ENCODE measurements at regions of chr9 and their contacts with region 1.

Region 1: DNA sequence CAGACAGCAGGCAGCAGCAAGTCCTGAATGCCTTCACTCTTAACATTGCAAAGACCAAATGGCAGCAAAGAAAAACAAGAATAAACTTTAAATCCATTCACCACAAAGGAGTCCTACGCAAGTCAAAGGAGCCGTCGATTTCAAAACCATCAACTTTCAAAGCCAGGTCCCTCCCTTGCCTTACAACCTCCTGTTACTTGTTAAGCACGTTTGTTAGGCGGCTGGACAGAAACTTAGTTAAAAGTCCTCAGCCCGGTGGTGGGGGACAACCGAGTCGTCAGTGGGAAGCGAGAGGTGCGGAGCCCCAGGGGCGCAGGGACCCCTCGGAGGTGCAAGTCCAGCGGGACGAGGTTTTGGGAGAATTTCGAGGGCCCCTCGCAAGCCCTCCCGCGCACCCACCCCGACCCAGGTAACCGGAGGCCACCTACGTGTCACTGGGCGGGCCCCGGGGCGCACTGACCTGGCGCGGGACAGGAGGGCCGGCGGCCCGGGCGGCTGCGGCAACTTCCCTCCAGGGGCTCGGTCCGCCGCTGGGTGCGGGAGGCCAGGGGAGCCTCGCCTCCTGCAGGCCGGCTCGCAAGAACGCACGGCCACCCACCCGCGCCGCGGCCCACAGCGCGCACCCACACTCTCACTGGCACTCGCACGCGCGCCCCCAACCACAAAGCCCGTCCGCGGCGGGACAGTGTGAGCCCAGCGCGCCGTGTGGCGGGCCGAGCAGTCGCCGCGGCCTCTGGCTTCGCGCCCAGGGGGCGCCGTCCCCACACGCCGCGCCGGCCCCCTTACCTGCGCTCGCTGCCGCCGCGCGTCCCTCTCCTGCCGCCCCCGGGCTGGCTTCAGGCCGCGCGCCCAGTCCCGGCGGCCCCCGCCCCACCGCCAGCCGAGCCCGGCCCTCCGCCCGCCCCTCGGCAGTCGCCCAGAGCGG is 627 bp downstream of the LPAR1 start:
- DNase-seq: peak in 1 of 2 donors; percentile 65
- H3K4me3 ChIP-seq: peak overlapping the region; percentile 73 to 81
- H3K27ac ChIP-seq: peak overlapping the region; percentile 92 to 95
- H3K4me1 ChIP-seq: peaks cover 0 to 16% of the 10 kb centered on the region in 2 donors
- H3K27me3 ChIP-seq: no peaks in the 10 kb centered on the region
- CTCF ChIP-seq: peak in 2 of 3 experiments; percentile 5 to 19

Region 2: DNA sequence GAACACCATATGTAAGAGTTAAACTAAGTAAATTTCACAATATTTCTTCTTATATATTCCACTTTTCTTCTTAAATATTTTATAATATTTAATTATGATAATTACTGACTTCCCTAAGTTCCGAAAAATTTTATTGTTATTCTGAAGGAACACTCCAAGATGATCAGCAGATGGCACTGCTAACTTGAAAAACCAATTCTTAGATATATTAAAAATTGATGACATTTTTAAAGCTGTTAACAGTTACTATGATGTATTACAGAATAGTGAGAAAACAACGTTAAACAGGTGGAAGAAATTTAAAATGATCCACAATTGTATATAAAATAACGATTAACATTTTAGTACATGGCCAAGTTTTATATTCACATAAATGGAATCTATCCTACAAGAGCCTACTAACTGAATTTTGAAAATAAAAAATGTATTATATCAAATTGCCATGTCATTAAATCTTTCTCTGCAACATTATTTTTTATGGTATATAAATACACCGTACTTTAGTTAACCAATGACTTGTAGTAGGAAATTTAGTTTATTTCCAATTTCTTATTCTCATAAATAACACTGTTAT is 399.2 kb before region 1 on chr9:
- intact Hi-C with region 1: loop called (anchors 5 kb)
- DNase-seq: no peak
- H3K4me3 ChIP-seq: no peak overlapping the region
- H3K27ac ChIP-seq: no peak overlapping the region
- H3K4me1 ChIP-seq: no peaks in the 10 kb centered on the region
- H3K27me3 ChIP-seq: no peaks in the 10 kb centered on the region
- CTCF ChIP-seq: peak; percentile 41 to 68 (median 51)

Region 3: GRCh38 chr9:110650991-110651411 is 386.6 kb before region 1 on chr9:
- intact Hi-C with region 1: loop called (anchors 5 kb)
- DNase-seq: peak in 1 of 2 donors; percentile 77
- H3K4me3 ChIP-seq: no peak overlapping the region
- H3K27ac ChIP-seq: peak overlapping the region; percentile 64 to 65
- H3K4me1 ChIP-seq: peaks cover 0 to 13% of the 10 kb centered on the region in 2 donors
- H3K27me3 ChIP-seq: no peaks in the 10 kb centered on the region
- CTCF ChIP-seq: no peak

Region 4: GRCh38 chr9:110936719-110937452 is 100.8 kb before region 1 on chr9:
- intact Hi-C with region 1: loop called (anchors 5 kb)
- DNase-seq: peak in 1 of 2 donors; percentile 66
- H3K4me3 ChIP-seq: no peak overlapping the region
- H3K27ac ChIP-seq: peak overlapping the region; percentile 84 to 91
- H3K4me1 ChIP-seq: peaks cover 9 to 43% of the 10 kb centered on the region in 2 donors
- H3K27me3 ChIP-seq: no peaks in the 10 kb centered on the region
- CTCF ChIP-seq: no peak

Region 5: GRCh38 chr9:110996436-110997220 is 41.0 kb before region 1 on chr9:
- intact Hi-C with region 1: loop called (anchors 5 kb)
- DNase-seq: peak in 1 of 2 donors; percentile 71
- H3K4me3 ChIP-seq: no peak overlapping the region
- H3K27ac ChIP-seq: peak overlapping the region; percentile 54 to 67
- H3K4me1 ChIP-seq: peaks cover 0 to 29% of the 10 kb centered on the region in 2 donors
- H3K27me3 ChIP-seq: no peaks in the 10 kb centered on the region
- CTCF ChIP-seq: no peak

Region 6: DNA sequence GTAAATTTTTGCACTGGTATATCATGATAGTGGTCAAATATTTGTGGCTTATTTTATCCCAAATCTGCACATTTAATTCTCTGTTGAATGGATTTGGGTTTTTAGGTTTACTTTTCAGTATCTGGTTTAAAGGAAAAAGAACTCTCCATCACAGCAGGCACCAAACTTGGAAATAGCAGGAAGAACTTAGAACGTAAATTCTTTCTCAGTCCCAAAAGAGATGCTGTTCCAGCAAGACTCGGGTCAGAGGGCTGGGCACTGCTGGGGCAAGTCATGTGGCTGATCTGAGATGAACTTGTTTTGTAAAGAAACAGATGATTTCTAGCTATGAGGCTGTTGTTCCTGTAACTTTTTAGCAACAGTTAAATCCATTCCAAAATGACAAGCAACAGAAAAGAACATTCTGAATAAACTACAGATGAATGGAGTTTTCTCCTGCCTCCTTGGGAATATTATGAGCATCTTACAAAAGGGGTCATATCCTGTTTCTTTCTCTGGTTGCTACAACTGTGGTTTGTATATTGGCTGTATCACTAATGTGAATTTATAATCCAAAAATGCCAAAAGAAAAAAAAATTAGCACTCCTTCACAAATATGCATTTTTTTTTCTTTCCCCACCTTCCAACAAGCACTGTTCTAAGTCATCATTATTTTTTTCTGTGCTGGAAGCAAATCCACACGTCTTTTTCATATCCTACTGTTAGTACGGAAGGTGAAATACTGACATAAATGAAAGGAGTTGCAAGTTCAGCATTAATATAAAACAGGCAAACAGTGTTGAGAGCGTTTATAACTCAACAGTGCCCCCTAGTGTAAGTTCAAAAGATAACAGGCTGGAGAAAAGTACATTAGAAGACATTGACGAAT is 261.3 kb after region 1 on chr9:
- intact Hi-C with region 1: loop called (anchors 1 kb)
- DNase-seq: peak in 1 of 2 donors; percentile 73
- H3K4me3 ChIP-seq: peak overlapping the region in 1 of 2 donors; percentile 50
- H3K27ac ChIP-seq: peak overlapping the region; percentile 49 to 78
- H3K4me1 ChIP-seq: peaks cover 0 to 4% of the 10 kb centered on the region in 2 donors
- H3K27me3 ChIP-seq: no peaks in the 10 kb centered on the region
- CTCF ChIP-seq: peak; percentile 70 to 75 (median 73)